T-cell (primary cell): ENCODE measurements at regions of chr13 and their contacts with region 1.

Region 1: DNA sequence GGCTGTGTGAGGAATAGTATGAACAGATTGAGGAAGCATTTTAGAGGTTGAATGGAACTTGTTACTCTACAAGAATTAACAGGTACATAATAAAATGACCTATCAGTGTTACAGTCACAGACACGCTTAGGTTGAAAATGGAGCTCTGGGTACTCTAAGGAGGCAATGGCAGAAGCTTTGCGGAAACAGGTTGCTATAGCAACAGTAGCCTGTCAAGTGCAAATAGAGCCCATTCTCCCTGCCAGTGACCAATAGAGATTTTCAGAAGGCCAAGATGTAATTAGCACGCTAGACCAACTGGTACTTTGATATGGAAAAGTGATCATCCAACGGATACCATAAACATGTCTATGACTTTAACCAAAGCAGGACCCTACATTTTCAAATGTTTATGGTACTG is 148.5 kb upstream of the FREM2 start:
- DNase-seq: no peak
- ATAC-seq: no peak
- H3K4me3 ChIP-seq: no peak overlapping the region
- H3K4me3 Mint-ChIP-seq: no peak overlapping the region
- H3K27ac ChIP-seq: no peak overlapping the region
- H3K27ac Mint-ChIP-seq: no peak overlapping the region
- H3K4me1 ChIP-seq: no peaks in the 10 kb centered on the region
- H3K4me1 Mint-ChIP-seq: no peaks in the 10 kb centered on the region
- H3K27me3 ChIP-seq: no peaks in the 10 kb centered on the region
- H3K27me3 Mint-ChIP-seq: no peaks in the 10 kb centered on the region

Region 2: GRCh38 chr13:37934339-37935191 is 603.9 kb before region 1 on chr13:
- CTCF ChIA-PET with region 1: interaction called in 1 of 2 experiments, 13 read pairs
- POLR2A ChIA-PET with region 1: no interaction called
- DNase-seq: no peak
- ATAC-seq: no peak
- H3K4me3 ChIP-seq: no peak overlapping the region
- H3K4me3 Mint-ChIP-seq: no peak overlapping the region
- H3K27ac ChIP-seq: no peak overlapping the region
- H3K27ac Mint-ChIP-seq: no peak overlapping the region
- H3K4me1 ChIP-seq: no peaks in the 10 kb centered on the region
- H3K4me1 Mint-ChIP-seq: no peaks in the 10 kb centered on the region
- H3K27me3 ChIP-seq: no peaks in the 10 kb centered on the region
- H3K27me3 Mint-ChIP-seq: no peaks in the 10 kb centered on the region